IMR-90 (cell line): ENCODE measurements at regions of chr18 and their contacts with region 1.

Region 1: DNA sequence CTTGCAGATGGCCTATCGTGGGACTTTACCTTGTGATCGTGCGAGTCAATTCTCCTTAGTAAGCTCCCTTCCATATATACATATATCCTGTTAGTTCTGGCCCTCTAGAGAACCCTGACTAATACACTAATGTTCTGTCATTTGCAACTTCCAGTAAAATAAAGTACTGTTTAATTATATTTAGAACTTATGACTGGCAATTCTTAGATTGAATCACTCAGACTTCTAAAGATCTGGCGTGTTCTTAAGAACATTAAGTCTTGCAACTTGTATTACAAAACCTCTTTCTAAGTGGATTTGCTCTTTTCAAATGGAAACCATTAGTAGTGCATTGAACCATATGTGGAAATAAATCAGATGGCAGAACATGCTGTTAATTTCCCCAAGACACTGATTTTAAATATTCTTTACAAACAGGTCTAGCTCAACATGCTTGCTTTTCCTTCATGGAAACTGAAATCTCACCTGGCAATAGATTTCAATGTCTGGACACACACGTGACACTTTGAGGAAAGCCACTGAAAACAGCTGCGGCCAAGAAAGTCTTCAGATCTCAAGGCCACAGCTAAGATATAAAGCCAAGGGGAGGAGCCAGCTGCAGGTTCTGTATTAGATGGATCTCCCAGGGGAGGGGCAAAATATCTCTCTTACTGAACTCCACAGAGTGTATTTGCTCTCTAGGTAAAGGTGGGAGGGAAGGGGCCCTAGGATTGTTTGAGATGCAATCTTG is 50.6 kb downstream of the PMAIP1 start:
- DNase-seq: peak; percentile 55
- ATAC-seq: no peak
- H3K4me3 ChIP-seq: no peak overlapping the region
- H3K27ac ChIP-seq: no peak overlapping the region
- H3K4me1 ChIP-seq: peaks cover 6% of the 10 kb centered on the region; the same call in 1 of the 2 replicates
- H3K27me3 ChIP-seq: no peaks in the 10 kb centered on the region
- CTCF ChIP-seq: no peak
- POLR2A ChIP-seq: no peak
- RAD21 ChIP-seq: no peak

Region 2: GRCh38 chr18:59910967-59911366 is 39.4 kb before region 1 on chr18:
- CTCF ChIA-PET with region 1: interaction called, 5 read pairs
- POLR2A ChIA-PET with region 1: no interaction called
- dilution Hi-C with region 1: no loop called
- in situ Hi-C with region 1: no loop called
- intact Hi-C with region 1: loop called (anchors 5 kb)
- DNase-seq: peak; percentile 73
- ATAC-seq: peak; percentile 55
- H3K4me3 ChIP-seq: no peak overlapping the region
- H3K27ac ChIP-seq: peak overlapping the region; percentile 88
- H3K4me1 ChIP-seq: peaks cover 22% of the 10 kb centered on the region
- H3K27me3 ChIP-seq: no peaks in the 10 kb centered on the region
- CTCF ChIP-seq: no peak
- POLR2A ChIP-seq: no peak
- RAD21 ChIP-seq: no peak

Region 3: DNA sequence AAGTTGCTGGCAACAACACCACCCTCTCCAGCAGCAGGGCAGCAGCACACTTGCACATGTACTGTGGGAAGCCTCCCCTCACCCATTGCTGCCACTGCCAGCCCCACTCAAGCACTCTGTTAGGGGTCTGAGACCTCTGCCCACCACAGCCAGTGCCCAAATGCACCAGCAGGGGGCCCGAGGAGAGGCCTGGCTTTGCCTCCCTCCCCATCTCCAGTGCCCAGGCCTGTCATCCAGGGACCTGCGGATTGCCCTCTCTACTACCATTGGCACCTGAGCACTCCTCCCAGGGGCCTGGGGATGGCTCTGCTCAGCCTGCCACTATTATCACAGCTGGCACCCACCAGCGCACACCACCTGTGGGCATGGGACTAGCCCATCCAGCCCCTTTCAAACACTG is 125.1 kb after region 1 on chr18:
- CTCF ChIA-PET with region 1: no interaction called
- POLR2A ChIA-PET with region 1: no interaction called
- dilution Hi-C with region 1: no loop called
- in situ Hi-C with region 1: no loop called
- intact Hi-C with region 1: no loop called
- DNase-seq: no peak
- ATAC-seq: no peak
- H3K4me3 ChIP-seq: no peak overlapping the region
- H3K27ac ChIP-seq: no peak overlapping the region
- H3K4me1 ChIP-seq: no peaks in the 10 kb centered on the region
- H3K27me3 ChIP-seq: no peaks in the 10 kb centered on the region
- CTCF ChIP-seq: no peak
- POLR2A ChIP-seq: no peak
- RAD21 ChIP-seq: no peak